Heart right ventricle (tissue), 16 donors: ENCODE measurements at regions of chr1 and their contacts with region 1.

Region 1: GRCh38 chr1:229479660-229480399 is 28.3 kb downstream of the NUP133 start:
- DNase-seq: no peak
- ATAC-seq: peak in 2 of 8 donors; percentile 39 to 48
- H3K4me3 ChIP-seq: no peak overlapping the region
- H3K27ac ChIP-seq: peak overlapping the region in 1 of 10 donors; percentile 9
- H3K4me1 ChIP-seq: peaks cover 0 to 12% (median 4%) of the 10 kb centered on the region in 9 donors
- H3K27me3 ChIP-seq: no peaks in the 10 kb centered on the region
- CTCF ChIP-seq: no peak

Region 2: GRCh38 chr1:228664399-228664914 is 815.4 kb before region 1 on chr1:
- intact Hi-C with region 1: loop called in 1 of 10 experiments (anchors 10 kb)
- DNase-seq: peak; percentile 62 to 75
- ATAC-seq: peak in 4 of 8 donors; percentile 33 to 55 (median 47)
- H3K4me3 ChIP-seq: no peak overlapping the region
- H3K27ac ChIP-seq: no peak overlapping the region
- H3K4me1 ChIP-seq: peaks cover 0 to 13% (median 3%) of the 10 kb centered on the region in 9 donors
- H3K27me3 ChIP-seq: peaks cover 0 to 10% (median 0%) of the 10 kb centered on the region in 7 donors
- CTCF ChIP-seq: peak; percentile 70 to 94 (median 84)

Region 3: DNA sequence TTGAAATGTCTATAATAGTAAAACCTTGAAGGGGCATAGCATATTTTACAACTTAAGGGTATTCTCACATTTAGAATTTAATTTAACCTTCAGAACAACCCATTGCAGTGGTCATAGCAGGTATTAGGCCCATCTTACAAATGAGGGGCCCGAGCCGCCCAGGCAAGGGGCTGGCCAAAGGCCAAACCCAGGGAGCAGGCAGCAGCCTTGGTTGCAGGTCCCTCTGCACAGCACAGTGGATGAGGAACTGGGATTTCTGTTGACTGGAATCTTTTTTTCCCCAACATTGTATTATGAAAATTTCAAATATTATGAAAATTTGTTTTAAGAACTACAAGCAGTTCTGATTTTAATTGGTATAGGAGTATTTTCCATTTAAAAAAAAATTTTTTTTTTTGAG is 170.1 kb before region 1 on chr1:
- intact Hi-C with region 1: loop called in 1 of 10 experiments (anchors 5 kb)
- DNase-seq: no peak
- ATAC-seq: peak in 4 of 8 donors; percentile 49 to 72 (median 68)
- H3K4me3 ChIP-seq: no peak overlapping the region
- H3K27ac ChIP-seq: peak overlapping the region in 3 of 10 donors; percentile 6 to 49 (median 10)
- H3K4me1 ChIP-seq: peaks cover 0 to 19% (median 4%) of the 10 kb centered on the region in 9 donors
- H3K27me3 ChIP-seq: no peaks in the 10 kb centered on the region
- CTCF ChIP-seq: no peak

Region 4: DNA sequence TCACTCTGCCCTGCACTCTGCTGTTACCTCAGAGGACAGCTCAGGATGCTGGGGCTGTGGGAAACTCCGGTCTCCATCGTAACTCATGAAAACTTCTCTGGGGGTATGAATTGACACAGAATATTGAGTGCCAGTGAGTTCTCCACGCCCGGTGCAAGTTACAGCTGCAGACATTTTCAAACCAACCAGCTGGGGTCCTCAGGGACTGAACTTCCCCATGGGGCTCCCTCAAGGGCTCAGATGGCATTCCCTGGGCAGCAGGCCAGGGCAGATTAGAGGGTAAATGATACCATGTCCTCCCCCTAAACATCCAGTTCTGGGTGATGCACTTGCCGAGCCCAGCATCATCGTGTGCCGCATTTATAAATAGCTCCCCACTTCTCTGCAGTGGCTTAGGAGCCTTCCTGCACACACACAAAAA is 109.2 kb before region 1 on chr1:
- intact Hi-C with region 1: loop called in 2 of 10 experiments (anchors 5 kb)
- DNase-seq: peak; percentile 63 to 78
- ATAC-seq: peak; percentile 90 to 99 (median 96)
- H3K4me3 ChIP-seq: no peak overlapping the region
- H3K27ac ChIP-seq: peak overlapping the region in 6 of 10 donors; percentile 13 to 69 (median 58)
- H3K4me1 ChIP-seq: peaks cover 0 to 8% (median 0%) of the 10 kb centered on the region in 9 donors
- H3K27me3 ChIP-seq: peaks cover 0 to 13% (median 0%) of the 10 kb centered on the region in 7 donors
- CTCF ChIP-seq: peak in 6 of 9 donors; percentile 15 to 49 (median 40)

Region 5: DNA sequence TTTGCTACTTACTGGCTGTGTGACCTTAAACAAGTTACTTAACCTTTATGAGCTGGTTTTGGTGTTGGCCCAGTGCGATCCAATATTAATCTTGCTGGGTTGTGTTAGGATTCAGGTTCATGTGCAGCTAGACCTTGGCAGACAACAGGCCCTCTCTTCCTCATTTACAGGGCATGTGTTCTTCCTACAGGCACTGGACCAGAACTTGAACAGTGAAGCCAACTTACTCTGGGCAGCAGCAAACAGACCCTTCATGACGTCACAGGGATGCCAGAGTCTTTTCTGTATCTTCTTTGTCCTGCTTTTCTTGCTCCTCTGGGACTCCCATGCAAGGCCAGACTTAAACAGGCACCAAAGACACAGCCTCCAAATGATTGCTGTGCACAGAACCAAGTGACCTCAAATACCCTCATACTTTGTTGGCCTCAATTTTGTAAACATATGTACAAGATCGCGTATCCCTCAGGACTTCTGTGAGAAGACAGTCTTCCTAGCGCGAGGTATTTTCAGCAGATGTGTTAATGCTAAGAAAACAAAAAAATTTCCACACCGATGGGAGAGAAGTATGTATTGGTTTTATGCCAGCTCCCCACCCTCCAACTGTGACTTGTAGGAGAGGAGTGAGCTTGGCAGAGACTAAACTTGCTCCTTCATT is 219.9 kb after region 1 on chr1:
- intact Hi-C with region 1: no loop called
- DNase-seq: no peak
- ATAC-seq: peak in 7 of 8 donors; percentile 11 to 70 (median 29)
- H3K4me3 ChIP-seq: no peak overlapping the region
- H3K27ac ChIP-seq: no peak overlapping the region
- H3K4me1 ChIP-seq: peaks cover 0 to 17% (median 5%) of the 10 kb centered on the region in 9 donors
- H3K27me3 ChIP-seq: no peaks in the 10 kb centered on the region
- CTCF ChIP-seq: no peak